Mammary epithelial cell (primary cell): ENCODE measurements at regions of chr12 and their contacts with region 1.

Region 1: GRCh38 chr12:120580787-120581723 is at the start of gene POP5:
- DNase-seq: peak; percentile 97
- H3K4me3 ChIP-seq: peak within 1 kb of the TSS; percentile 49 to 87 (median 81)
- H3K27ac ChIP-seq: peak within 1 kb of the TSS; percentile 10
- H3K4me1 ChIP-seq: peaks cover 16% of the 10 kb centered on the region
- H3K27me3 ChIP-seq: no peaks in the 10 kb centered on the region
- CTCF ChIP-seq: no peak
- total RNA-seq, gene POP5: 19.3 to 35.6 TPM

Region 2: GRCh38 chr12:119980242-119980641 is 600.8 kb before region 1 on chr12:
- CTCF ChIA-PET with region 1: no interaction called
- dilution Hi-C with region 1: no loop called
- in situ Hi-C with region 1: no loop called
- intact Hi-C with region 1: no loop called
- DNase-seq: no peak
- H3K4me3 ChIP-seq: no peak overlapping the region
- H3K27ac ChIP-seq: no peak overlapping the region
- H3K4me1 ChIP-seq: no peaks in the 10 kb centered on the region
- H3K27me3 ChIP-seq: peaks cover 2% of the 10 kb centered on the region
- CTCF ChIP-seq: no peak

Region 3: DNA sequence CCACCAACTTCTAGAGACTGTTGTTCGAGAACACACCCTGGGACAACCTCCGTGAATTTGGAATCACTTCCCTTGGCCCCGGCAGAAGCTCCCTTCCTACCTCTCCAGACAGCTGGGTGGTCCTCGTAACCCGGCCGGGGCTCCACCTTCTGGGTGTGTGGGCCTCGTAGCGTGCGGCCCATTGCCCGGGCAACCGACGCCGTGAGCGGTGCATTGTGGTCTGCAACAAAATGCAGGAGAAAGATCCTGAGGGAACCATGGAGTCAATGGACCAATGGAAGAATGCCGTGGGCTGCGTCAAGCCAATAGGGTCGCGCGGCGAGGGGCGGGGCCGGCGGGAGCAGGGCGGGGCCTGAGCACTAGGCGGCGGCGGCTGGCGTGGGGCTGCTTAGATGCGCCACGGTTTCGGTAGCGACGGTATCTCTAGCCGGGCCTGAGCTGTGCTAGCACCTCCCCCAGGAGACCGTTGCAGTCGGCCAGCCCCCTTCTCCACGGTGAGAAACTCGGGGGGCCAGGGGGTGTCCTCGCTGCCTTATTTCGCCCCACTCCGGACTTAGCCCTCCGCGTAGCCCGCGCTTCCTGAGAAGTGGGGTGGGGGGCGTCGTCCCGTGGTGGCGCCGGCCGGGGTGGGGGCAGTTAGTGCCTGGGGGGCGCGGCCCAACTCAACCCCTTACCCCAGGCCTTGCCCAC is 85.2 kb before region 1 on chr12 and contains the start of gene DYNLL1:
- CTCF ChIA-PET with region 1: no interaction called
- dilution Hi-C with region 1: no loop called
- in situ Hi-C with region 1: no loop called
- intact Hi-C with region 1: loop called (anchors 5 kb)
- DNase-seq: peak; percentile 94
- H3K4me3 ChIP-seq: peak within 1 kb of the TSS; percentile 73 to 81 (median 74)
- H3K27ac ChIP-seq: peak within 1 kb of the TSS; percentile 80
- H3K4me1 ChIP-seq: peaks cover 14% of the 10 kb centered on the region
- H3K27me3 ChIP-seq: no peaks in the 10 kb centered on the region
- CTCF ChIP-seq: no peak
- total RNA-seq, gene DYNLL1: 210 to 390 TPM

Region 4: GRCh38 chr12:120649442-120650232 is 68.6 kb after region 1 on chr12:
- CTCF ChIA-PET with region 1: interaction called, 5 read pairs
- dilution Hi-C with region 1: no loop called
- in situ Hi-C with region 1: no loop called
- intact Hi-C with region 1: loop called (anchors 1 kb)
- DNase-seq: no peak
- H3K4me3 ChIP-seq: no peak overlapping the region
- H3K27ac ChIP-seq: no peak overlapping the region
- H3K4me1 ChIP-seq: peaks cover 9% of the 10 kb centered on the region
- H3K27me3 ChIP-seq: peaks cover 1% of the 10 kb centered on the region
- CTCF ChIP-seq: no peak

Region 5: GRCh38 chr12:120692524-120693033 is 111.5 kb after region 1 on chr12:
- CTCF ChIA-PET with region 1: no interaction called
- dilution Hi-C with region 1: no loop called
- in situ Hi-C with region 1: no loop called
- intact Hi-C with region 1: no loop called
- DNase-seq: no peak
- H3K4me3 ChIP-seq: no peak overlapping the region
- H3K27ac ChIP-seq: no peak overlapping the region
- H3K4me1 ChIP-seq: peaks cover 20% of the 10 kb centered on the region
- H3K27me3 ChIP-seq: no peaks in the 10 kb centered on the region
- CTCF ChIP-seq: no peak

Region 6: GRCh38 chr12:120856980-120857379 is 275.9 kb after region 1 on chr12:
- CTCF ChIA-PET with region 1: no interaction called
- dilution Hi-C with region 1: no loop called
- in situ Hi-C with region 1: no loop called
- intact Hi-C with region 1: loop called (anchors 5 kb)
- DNase-seq: peak; percentile 61
- H3K4me3 ChIP-seq: no peak overlapping the region
- H3K27ac ChIP-seq: no peak overlapping the region
- H3K4me1 ChIP-seq: peaks cover 16% of the 10 kb centered on the region
- H3K27me3 ChIP-seq: no peaks in the 10 kb centered on the region
- CTCF ChIP-seq: peak; percentile 25 to 58

Region 7: DNA sequence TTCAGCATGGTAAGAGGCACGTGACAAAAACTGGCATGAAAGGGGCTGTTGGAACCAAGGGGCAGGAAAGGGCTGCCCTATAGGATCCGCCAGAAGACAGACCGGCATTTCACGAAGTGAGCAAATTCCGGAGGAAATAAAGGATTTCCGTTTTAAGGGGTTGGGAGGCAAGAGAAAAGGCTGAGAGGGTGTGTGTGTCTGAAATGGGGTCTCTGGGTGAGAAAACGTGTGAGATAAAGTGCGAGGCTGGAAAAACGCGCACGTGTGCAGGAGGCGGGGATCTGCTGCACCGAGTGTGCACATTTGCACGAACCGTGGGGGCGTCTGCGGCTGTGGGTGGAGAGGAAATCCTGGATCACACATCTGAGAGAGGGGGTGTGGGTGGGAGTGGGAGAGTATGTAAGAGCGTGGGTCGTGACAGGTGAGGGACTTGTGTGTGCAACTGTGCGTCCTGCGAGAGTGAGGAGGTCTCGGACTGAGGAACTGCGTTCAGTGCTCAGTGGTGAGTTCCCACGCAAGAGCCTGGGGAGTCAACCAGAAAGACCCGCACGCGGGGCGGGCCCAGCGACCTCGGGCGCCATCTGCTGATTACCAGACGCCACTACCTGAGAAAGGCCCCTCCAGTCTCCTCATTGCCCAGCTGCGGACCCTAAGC is 514.6 kb after region 1 on chr12:
- CTCF ChIA-PET with region 1: interaction called, 3 read pairs
- dilution Hi-C with region 1: no loop called
- in situ Hi-C with region 1: no loop called
- intact Hi-C with region 1: loop called (anchors 1 kb)
- DNase-seq: no peak
- H3K4me3 ChIP-seq: peak overlapping the region in 1 of 3 experiments; percentile 0
- H3K27ac ChIP-seq: no peak overlapping the region
- H3K4me1 ChIP-seq: peaks cover 5% of the 10 kb centered on the region
- H3K27me3 ChIP-seq: no peaks in the 10 kb centered on the region
- CTCF ChIP-seq: peak; percentile 46 to 80